CD4-positive, alpha-beta T cell (primary cell): ENCODE measurements at regions of chr14 and their contacts with region 1.

Region 1: GRCh38 chr14:99779751-99780150 is 13.5 kb upstream of the EML1 start:
- DNase-seq: no peak
- ATAC-seq: no peak
- H3K4me3 ChIP-seq: no peak overlapping the region
- H3K4me3 Mint-ChIP-seq: no peak overlapping the region
- H3K27ac ChIP-seq: no peak overlapping the region
- H3K27ac Mint-ChIP-seq: no peak overlapping the region
- H3K4me1 ChIP-seq: no peaks in the 10 kb centered on the region
- H3K4me1 Mint-ChIP-seq: no peaks in the 10 kb centered on the region
- H3K27me3 ChIP-seq: peaks cover 7% of the 10 kb centered on the region in 2 experiments
- H3K27me3 Mint-ChIP-seq: peaks cover 65% of the 10 kb centered on the region
- CTCF ChIP-seq: no peak

Region 2: DNA sequence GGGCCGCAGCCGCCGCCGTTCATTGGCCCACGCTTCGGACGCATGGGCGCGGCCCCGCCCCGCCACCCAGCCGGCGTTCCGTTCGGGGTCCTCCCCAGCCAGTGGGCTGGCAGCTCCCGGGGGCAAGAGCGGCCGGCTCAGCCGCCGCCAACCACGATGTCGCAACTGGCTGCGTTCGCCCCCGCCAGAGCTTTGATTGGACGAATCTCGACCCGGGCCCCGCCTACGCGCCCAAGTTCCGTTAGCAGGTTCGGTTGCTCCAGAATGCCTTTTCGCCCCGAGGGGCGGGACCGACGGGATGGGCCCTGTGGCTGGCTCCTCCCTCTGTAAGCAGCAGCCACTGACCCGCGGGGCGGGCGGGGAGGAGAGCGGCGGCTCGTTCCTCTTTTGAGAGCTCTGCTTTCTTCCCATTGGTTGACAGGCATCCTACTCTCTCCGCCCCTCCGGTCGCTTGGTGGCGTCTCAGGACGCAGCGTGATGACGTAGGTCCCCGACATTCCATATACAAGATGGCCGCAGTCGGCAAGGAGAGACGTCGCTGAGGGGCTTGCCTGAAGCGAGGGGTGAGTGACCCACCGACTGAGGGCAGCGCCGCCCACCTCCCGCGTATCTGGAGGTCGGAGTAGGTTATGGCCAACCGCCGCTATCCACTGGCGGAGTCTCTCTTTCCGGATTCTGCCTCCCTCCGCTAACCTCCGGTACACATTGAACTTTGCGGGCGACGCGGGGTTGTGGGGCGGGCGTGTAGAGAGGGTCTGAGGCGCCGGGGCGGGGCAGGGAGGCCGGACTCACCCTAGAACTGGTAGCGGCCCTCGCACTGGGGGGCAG is 298.6 kb before region 1 on chr14 and contains the start of gene CCNK:
- CTCF ChIA-PET with region 1: no interaction called
- POLR2A ChIA-PET with region 1: no interaction called
- intact Hi-C with region 1: loop called in 1 of 2 experiments (anchors 10 kb)
- DNase-seq: peak; percentile 100
- ATAC-seq: peak; percentile 87
- H3K4me3 ChIP-seq: peak within 1 kb of the TSS; percentile 96
- H3K4me3 Mint-ChIP-seq: peak within 1 kb of the TSS; percentile 92
- H3K27ac ChIP-seq: peak within 1 kb of the TSS; percentile 90 to 96
- H3K27ac Mint-ChIP-seq: peak within 1 kb of the TSS; percentile 94
- H3K4me1 ChIP-seq: peaks cover 29% of the 10 kb centered on the region
- H3K4me1 Mint-ChIP-seq: peaks cover 74% of the 10 kb centered on the region
- H3K27me3 ChIP-seq: no peaks in the 10 kb centered on the region
- H3K27me3 Mint-ChIP-seq: no peaks in the 10 kb centered on the region
- CTCF ChIP-seq: no peak
- total RNA-seq, gene CCNK: 140 to 151 TPM

Region 3: GRCh38 chr14:99793213-99794150 is 13.7 kb after region 1 on chr14 and contains the start of gene EML1:
- CTCF ChIA-PET with region 1: no interaction called
- POLR2A ChIA-PET with region 1: no interaction called
- intact Hi-C with region 1: no loop called
- DNase-seq: peak; percentile 56 to 91 (median 71)
- ATAC-seq: peak; percentile 81
- H3K4me3 ChIP-seq: peak within 1 kb of the TSS; percentile 29
- H3K4me3 Mint-ChIP-seq: peak within 1 kb of the TSS; percentile 83
- H3K27ac ChIP-seq: no peak within 1 kb of the TSS
- H3K27ac Mint-ChIP-seq: no peak within 1 kb of the TSS
- H3K4me1 ChIP-seq: peaks cover 8% of the 10 kb centered on the region
- H3K4me1 Mint-ChIP-seq: peaks cover 29% of the 10 kb centered on the region
- H3K27me3 ChIP-seq: peaks cover 12 to 19% of the 10 kb centered on the region in 2 experiments
- H3K27me3 Mint-ChIP-seq: peaks cover 38% of the 10 kb centered on the region
- CTCF ChIP-seq: no peak
- total RNA-seq, gene EML1: 0.59 TPM in 1 of 2 experiments, not detected in the other